PC-9 (cell line): ENCODE measurements at regions of chr2 and their contacts with region 1.

Region 1: GRCh38 chr2:246489-247144 is 17.2 kb downstream of the SH3YL1 start:
- DNase-seq: peak; percentile 25 to 46
- H3K4me3 ChIP-seq: no peak overlapping the region
- H3K27ac ChIP-seq: no peak overlapping the region
- H3K4me1 ChIP-seq: no peaks in the 10 kb centered on the region
- H3K27me3 ChIP-seq: no peaks in the 10 kb centered on the region
- CTCF ChIP-seq: peak; percentile 75

Region 2: GRCh38 chr2:636641-637405 is 390.2 kb after region 1 on chr2:
- CTCF ChIA-PET with region 1: no interaction called
- POLR2A ChIA-PET with region 1: no interaction called
- intact Hi-C with region 1: loop called (anchors 1 kb)
- DNase-seq: peak; percentile 41 to 43
- H3K4me3 ChIP-seq: no peak overlapping the region
- H3K27ac ChIP-seq: no peak overlapping the region
- H3K4me1 ChIP-seq: peaks cover 8% of the 10 kb centered on the region
- H3K27me3 ChIP-seq: no peaks in the 10 kb centered on the region
- CTCF ChIP-seq: peak; percentile 93